ENCODE measurements at regions of chr2 and their contacts with region 1.

Region 1: DNA sequence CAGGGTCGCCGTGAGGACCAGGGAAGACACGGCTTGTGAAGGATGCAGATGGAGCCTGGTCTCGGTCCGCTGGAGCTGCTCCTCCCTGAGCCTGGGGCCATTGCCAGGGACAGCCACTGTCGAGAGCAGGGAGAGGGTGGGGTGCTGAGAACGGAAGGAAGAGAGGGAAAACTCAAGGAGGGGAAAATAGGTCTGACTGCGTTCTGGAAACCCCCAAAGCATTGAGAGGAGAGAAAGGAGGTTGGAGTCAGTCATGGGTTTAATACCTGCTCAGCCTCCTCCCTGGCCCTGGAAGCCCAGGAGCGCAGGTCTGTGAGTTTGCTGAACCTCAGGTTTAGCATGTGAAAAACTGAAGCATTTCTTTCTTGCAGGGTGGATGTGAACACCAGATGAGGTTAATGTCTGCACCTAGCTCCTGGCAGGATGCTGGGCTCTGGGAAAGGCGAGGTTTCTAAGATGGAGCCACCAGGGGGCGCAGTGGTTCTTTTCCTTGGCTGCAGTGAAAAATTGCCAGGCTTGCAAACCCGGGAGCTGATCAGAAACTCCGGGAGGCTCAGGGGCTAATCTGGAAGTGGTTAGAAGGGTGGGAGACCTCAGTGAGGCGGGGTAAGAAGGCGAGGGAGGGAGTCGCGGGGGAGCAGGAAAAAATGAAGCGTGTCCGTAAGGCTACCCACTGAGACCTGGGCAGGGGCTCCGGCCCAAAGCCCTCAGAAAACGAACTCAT is 33.6 kb upstream of the RNF149 start:
- DNase-seq: peak; percentile 46
- H3K4me3 Mint-ChIP-seq: no peak overlapping the region
- H3K27ac Mint-ChIP-seq: no peak overlapping the region
- H3K4me1 Mint-ChIP-seq: peaks cover 33% of the 10 kb centered on the region
- H3K27me3 Mint-ChIP-seq: peaks cover 18% of the 10 kb centered on the region

Region 2: DNA sequence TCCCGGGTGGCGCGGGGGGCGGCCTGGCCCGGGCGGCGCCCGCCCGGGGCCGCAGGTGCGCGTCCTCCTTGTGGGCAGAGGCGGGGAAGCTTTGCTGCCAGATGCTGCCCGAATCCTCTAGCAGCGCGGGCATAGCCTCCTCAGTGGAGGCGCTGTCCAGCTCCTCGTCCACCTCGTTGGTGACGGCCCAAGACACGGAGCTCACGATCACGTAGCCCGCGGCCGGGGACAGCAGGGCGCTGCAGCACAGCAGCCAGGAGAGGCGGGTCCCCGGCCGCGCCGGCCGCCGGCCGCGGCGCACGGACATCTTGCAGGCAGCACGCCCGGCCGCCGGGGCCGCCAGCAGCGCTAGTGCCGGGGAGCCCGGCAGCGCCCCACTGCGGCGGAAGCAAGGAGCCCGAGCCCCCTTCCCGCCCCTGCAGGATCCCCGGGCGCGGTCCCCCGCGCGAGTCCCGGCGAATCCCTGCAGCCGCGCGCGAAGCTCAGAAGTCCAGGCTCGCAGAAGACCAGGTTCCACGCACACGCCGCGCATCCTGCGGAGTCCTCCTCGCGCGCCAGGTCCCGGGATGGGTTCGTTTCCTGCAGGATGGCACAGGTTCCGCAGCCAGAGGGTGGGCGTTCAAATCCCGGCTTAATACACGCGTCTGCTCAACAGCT is 45.2 kb after region 1 on chr2 and contains the start of gene CREG2:
- intact Hi-C with region 1: loop called (anchors 2 kb)
- DNase-seq: peak; percentile 56
- H3K4me3 Mint-ChIP-seq: peak within 1 kb of the TSS; percentile 65
- H3K27ac Mint-ChIP-seq: no peak within 1 kb of the TSS
- H3K4me1 Mint-ChIP-seq: peaks cover 11% of the 10 kb centered on the region
- H3K27me3 Mint-ChIP-seq: peaks cover 64% of the 10 kb centered on the region
- total RNA-seq, gene CREG2: not detected in 2 replicates

Region 3: DNA sequence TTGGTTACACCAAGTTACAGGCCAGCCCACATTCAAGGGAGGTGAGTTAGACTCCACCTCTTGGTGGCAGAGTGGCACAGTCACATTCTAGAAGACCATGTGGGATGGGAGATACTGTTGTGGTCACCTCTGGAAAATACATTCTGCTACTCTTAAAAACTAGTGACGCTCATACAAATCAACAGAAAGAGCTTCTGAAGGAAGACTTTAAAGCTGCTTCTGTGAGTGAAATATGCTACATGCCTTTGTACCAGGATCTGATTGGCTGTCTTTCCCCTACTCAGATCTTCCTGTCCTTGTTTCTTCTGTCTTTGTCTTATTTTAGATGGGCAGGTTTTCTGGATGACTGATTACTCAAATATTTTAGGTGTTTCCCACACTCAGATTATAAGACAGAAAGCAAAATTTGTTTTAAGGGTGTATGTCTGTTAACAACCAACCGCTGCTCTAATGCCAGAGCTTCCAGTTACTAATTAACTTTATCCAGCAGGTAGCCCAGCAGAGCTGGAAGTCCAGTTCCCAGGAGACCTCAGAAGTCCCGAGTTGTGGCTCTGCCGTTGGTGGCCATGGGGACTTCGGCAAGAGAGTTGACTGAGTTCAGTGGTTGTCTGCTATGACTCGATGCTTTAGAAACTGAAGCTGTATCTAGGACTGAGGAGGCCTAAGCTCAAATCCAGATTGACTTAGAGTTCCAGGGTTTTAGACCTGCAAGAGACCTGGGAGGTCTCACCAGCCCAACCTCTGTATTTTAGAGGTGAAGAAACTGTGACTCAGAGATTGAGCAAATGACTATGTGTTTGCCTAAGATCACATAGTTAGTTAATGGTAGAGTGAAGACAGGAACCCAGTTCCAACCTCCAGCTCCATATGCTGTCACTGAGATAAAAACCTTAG is 657.1 kb after region 1 on chr2:
- intact Hi-C with region 1: loop called (anchors 10 kb)
- DNase-seq: no peak
- H3K4me3 Mint-ChIP-seq: no peak overlapping the region
- H3K27ac Mint-ChIP-seq: peak overlapping the region; percentile 76
- H3K4me1 Mint-ChIP-seq: peaks cover 27% of the 10 kb centered on the region
- H3K27me3 Mint-ChIP-seq: peaks cover 4% of the 10 kb centered on the region

Measured in activated T-helper 1 cell treated with anti-CD3 and anti-CD28 coated beads, Interleukin-12 subunit alpha, Interleukin-12 subunit beta, Interleukin-2, Interleukin-4 antibody, amounts not matched to agents 30 ng/mL and 10 ng/mL and 1 ng/mL, durations not matched to agents 14 hours and 24 hours and 36 hours (primary cell).